ENCODE measurements at regions of chr11 and their contacts with region 1.

Region 1: GRCh38 chr11:121112498-121113455 is 11.7 kb downstream of the TECTA start:
- DNase-seq: peak; percentile 64
- ATAC-seq: peak; percentile 88
- H3K4me3 Mint-ChIP-seq: no peak overlapping the region
- H3K27ac Mint-ChIP-seq: no peak overlapping the region
- H3K4me1 Mint-ChIP-seq: no peaks in the 10 kb centered on the region
- H3K27me3 Mint-ChIP-seq: peaks cover 6% of the 10 kb centered on the region

Region 2: DNA sequence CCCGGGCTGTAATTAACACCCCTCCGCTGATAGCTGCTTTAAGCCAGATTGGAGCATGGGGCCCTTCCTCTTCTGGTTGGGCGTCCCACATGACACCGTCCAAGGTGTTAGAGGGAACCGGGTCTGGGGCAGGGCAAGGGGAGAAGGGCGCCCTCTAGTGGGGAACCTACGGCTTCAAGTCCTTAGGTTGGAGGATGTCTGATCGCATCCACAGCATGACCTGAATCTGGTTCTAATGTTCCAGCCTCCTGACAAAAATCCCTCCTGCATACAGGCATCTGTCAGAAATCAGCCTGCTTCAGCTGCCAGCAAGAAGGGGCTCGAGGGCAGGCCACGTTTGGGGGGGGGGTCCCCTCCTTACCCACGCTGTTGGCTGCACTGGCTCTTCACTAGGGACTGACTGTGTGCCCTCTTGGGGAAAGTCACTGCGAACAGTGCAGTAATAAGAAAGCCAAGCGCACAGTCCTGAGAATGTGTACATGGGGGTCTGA is 183.1 kb before region 1 on chr11:
- CTCF ChIA-PET with region 1: no interaction called
- POLR2A ChIA-PET with region 1: no interaction called
- intact Hi-C with region 1: loop called in 1 of 2 experiments (anchors 2 kb)
- DNase-seq: peak; percentile 76
- ATAC-seq: peak; percentile 74
- H3K4me3 Mint-ChIP-seq: no peak overlapping the region
- H3K27ac Mint-ChIP-seq: no peak overlapping the region
- H3K4me1 Mint-ChIP-seq: no peaks in the 10 kb centered on the region
- H3K27me3 Mint-ChIP-seq: no peaks in the 10 kb centered on the region

Region 3: DNA sequence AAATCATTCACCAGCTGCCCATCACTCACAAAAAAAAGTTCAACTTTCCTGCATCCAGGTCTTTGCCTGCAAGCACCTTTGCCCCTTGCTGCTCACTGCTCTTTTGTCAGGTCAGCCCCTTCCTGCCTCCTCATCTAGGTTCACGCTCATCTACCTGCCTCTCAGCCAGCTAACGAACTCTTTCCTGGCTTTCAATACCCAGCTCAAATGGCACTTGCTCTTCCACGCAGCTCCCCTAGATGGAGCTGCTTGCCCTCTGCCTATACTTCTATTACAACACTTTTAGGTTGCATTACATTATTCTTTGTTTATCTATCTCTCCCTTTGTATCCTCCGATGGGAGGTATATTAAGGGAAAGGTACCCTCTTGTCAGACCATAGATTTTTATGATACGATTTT is 167.7 kb before region 1 on chr11:
- CTCF ChIA-PET with region 1: no interaction called
- POLR2A ChIA-PET with region 1: no interaction called
- intact Hi-C with region 1: loop called in 1 of 2 experiments (anchors 1 kb)
- DNase-seq: peak; percentile 14
- ATAC-seq: no peak
- H3K4me3 Mint-ChIP-seq: no peak overlapping the region
- H3K27ac Mint-ChIP-seq: no peak overlapping the region
- H3K4me1 Mint-ChIP-seq: no peaks in the 10 kb centered on the region
- H3K27me3 Mint-ChIP-seq: peaks cover 18% of the 10 kb centered on the region

Region 4: DNA sequence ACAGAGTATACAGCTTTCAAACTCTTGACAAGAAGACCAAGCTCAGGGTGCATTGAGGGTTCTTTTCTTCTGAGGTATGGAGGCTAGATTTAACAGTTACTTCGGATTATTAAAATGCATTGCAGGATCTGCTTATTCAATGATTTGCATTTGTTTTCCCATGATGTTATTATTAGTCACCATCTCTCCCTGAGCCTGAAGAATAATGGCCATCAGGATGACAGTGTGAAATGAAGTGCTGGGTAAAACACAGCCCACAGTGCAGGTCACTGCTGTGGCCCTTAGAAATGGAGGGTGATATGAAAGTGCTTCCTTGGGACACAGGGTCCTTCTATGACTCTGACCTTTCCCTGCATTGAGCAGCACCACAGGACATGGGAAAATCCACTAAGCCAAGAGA is 28.3 kb after region 1 on chr11:
- CTCF ChIA-PET with region 1: no interaction called
- POLR2A ChIA-PET with region 1: no interaction called
- intact Hi-C with region 1: no loop called
- DNase-seq: no peak
- ATAC-seq: no peak
- H3K4me3 Mint-ChIP-seq: no peak overlapping the region
- H3K27ac Mint-ChIP-seq: no peak overlapping the region
- H3K4me1 Mint-ChIP-seq: no peaks in the 10 kb centered on the region
- H3K27me3 Mint-ChIP-seq: no peaks in the 10 kb centered on the region